Prostate gland (tissue), 2 donors: ENCODE measurements at regions of chr5 and their contacts with region 1.

Region 1: GRCh38 chr5:177317959-177318377 is 6.3 kb upstream of the MXD3 start:
- DNase-seq: peak; percentile 80
- H3K4me3 ChIP-seq: no peak overlapping the region
- H3K27ac ChIP-seq: no peak overlapping the region
- H3K4me1 ChIP-seq: no peaks in the 10 kb centered on the region
- H3K27me3 ChIP-seq: no peaks in the 10 kb centered on the region
- CTCF ChIP-seq: peak; percentile 71 to 91 (median 81)
- POLR2A ChIP-seq: no peak

Region 2: DNA sequence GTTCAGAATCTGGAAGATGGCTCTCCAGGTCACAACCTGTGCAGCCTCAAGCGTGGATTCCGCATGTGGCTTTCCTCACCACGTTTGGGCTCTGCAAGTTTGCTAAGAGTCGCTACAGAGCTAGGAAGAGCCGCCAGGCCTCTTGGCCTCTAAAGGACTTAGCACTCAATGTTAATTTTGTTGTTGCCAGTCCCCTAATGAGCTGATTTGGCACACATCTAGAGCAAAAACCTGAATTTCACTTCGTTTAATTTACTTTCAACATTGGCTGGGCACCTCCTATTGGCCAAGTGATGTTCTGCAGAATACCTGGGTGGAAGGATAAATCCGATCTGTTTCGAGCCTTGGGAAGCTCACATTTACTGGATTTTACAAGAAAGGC is 573.4 kb before region 1 on chr5:
- intact Hi-C with region 1: no loop called
- DNase-seq: no peak
- H3K4me3 ChIP-seq: no peak overlapping the region
- H3K27ac ChIP-seq: no peak overlapping the region
- H3K4me1 ChIP-seq: peaks cover 6% of the 10 kb centered on the region
- H3K27me3 ChIP-seq: peaks cover 30% of the 10 kb centered on the region
- CTCF ChIP-seq: no peak
- POLR2A ChIP-seq: no peak

Region 3: DNA sequence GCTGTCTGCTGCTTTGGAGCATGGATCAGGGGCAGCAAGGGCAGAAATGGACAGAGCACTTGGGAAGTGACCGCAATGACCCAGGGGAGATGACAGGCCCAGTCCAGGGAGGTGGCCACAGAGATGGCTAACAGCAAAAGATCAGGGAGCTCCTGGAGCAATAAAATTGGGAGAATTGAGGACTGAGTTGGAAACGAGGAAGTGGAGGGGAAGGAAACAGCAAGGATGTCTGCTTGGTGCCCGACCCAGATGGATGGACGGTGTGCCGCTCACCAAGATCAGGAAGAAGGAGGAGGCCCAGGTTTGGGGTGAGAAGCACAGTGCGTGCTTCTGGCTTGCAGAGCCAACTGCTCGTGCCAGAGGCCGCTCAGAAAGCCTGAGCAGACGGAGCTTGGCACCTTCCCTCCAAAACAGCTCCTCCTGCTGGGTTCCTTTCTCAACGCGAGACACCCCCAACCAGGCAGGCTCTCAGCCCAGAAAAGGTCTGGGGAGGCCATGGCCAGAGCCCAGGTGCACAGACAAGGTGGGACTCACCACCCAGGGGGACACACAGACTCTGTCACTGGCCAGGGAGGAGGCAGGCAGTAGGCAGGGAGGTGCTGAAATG is 64.6 kb after region 1 on chr5:
- intact Hi-C with region 1: loop called (anchors 2 kb)
- DNase-seq: peak; percentile 72
- H3K4me3 ChIP-seq: no peak overlapping the region
- H3K27ac ChIP-seq: peak overlapping the region in 1 of 2 donors; percentile 49
- H3K4me1 ChIP-seq: no peaks in the 10 kb centered on the region
- H3K27me3 ChIP-seq: no peaks in the 10 kb centered on the region
- CTCF ChIP-seq: peak in 3 of 4 experiments; percentile 47 to 64 (median 63)
- POLR2A ChIP-seq: no peak